Panc1 (cell line): ENCODE measurements at regions of chr15 and their contacts with region 1.

Region 1: GRCh38 chr15:49900006-49900902 is 218.8 kb downstream of the ATP8B4 start:
- DNase-seq: no peak
- ATAC-seq: no peak
- H3K4me3 ChIP-seq: no peak overlapping the region
- H3K27ac ChIP-seq: no peak overlapping the region
- H3K4me1 ChIP-seq: no peaks in the 10 kb centered on the region
- H3K27me3 ChIP-seq: no peaks in the 10 kb centered on the region
- CTCF ChIP-seq: no peak

Region 2: GRCh38 chr15:49190586-49190985 is 709.7 kb before region 1 on chr15:
- CTCF ChIA-PET with region 1: no interaction called
- POLR2A ChIA-PET with region 1: interaction called, 14 read pairs
- in situ Hi-C with region 1: no loop called
- intact Hi-C with region 1: no loop called
- DNase-seq: no peak
- ATAC-seq: no peak
- H3K4me3 ChIP-seq: no peak overlapping the region
- H3K27ac ChIP-seq: no peak overlapping the region
- H3K4me1 ChIP-seq: no peaks in the 10 kb centered on the region
- H3K27me3 ChIP-seq: no peaks in the 10 kb centered on the region
- CTCF ChIP-seq: no peak